ENCODE measurements at regions of chrX and their contacts with region 1.

Region 1: GRCh38 chrX:39133971-39134370 is 332.7 kb downstream of the MID1IP1 start:
- DNase-seq: no peak
- H3K4me3 ChIP-seq: no peak overlapping the region
- H3K27ac ChIP-seq: no peak overlapping the region
- H3K4me1 ChIP-seq: no peaks in the 10 kb centered on the region
- H3K27me3 ChIP-seq: peaks cover 0 to 32% of the 10 kb centered on the region in 2 donors
- CTCF ChIP-seq: no peak
- POLR2A ChIP-seq: no peak

Region 2: DNA sequence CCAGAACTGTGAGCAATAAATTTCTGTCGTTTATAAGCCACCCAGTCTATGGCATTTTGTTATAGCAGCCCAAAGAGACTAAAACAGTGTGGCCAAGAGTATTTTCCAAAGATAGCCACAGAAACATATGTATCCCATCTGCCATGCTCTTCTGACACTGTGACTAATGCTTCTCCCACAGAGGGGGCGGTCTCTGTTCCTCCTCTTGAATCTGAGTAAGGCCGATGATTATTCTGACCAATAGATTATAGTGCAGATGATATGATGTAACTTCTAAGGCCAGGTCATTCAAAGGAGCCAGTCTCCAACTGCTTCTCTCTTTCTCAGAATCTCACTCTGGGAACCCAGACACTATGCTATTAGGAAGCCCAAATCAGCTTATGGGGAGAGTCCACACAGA is 393.1 kb after region 1 on chrX:
- intact Hi-C with region 1: loop called (anchors 5 kb)
- DNase-seq: no peak
- H3K4me3 ChIP-seq: no peak overlapping the region
- H3K27ac ChIP-seq: no peak overlapping the region
- H3K4me1 ChIP-seq: no peaks in the 10 kb centered on the region
- H3K27me3 ChIP-seq: peaks cover 0 to 58% of the 10 kb centered on the region in 2 donors
- CTCF ChIP-seq: no peak
- POLR2A ChIP-seq: no peak

Region 3: GRCh38 chrX:39642082-39642481 is 508.1 kb after region 1 on chrX:
- intact Hi-C with region 1: loop called (anchors 5 kb)
- DNase-seq: no peak
- H3K4me3 ChIP-seq: no peak overlapping the region
- H3K27ac ChIP-seq: no peak overlapping the region
- H3K4me1 ChIP-seq: no peaks in the 10 kb centered on the region
- H3K27me3 ChIP-seq: peaks cover 0 to 77% of the 10 kb centered on the region in 2 donors
- CTCF ChIP-seq: no peak
- POLR2A ChIP-seq: no peak